Right cardiac atrium (tissue), 5 donors: ENCODE measurements at regions of chr11 and their contacts with region 1.

Region 1: GRCh38 chr11:111283945-111284481 is 14.3 kb upstream of the POU2AF3 start:
- DNase-seq: peak; percentile 29 to 62 (median 55)
- ATAC-seq: peak; percentile 58 to 74
- H3K4me3 ChIP-seq: no peak overlapping the region
- H3K27ac ChIP-seq: no peak overlapping the region
- H3K4me1 ChIP-seq: no peaks in the 10 kb centered on the region
- H3K27me3 ChIP-seq: no peaks in the 10 kb centered on the region

Region 2: GRCh38 chr11:111327908-111328624 is 44.1 kb after region 1 on chr11:
- intact Hi-C with region 1: no loop called
- DNase-seq: peak in 2 of 3 donors; percentile 34 to 50
- ATAC-seq: peak; percentile 13 to 21
- H3K4me3 ChIP-seq: no peak overlapping the region
- H3K27ac ChIP-seq: peak overlapping the region; percentile 4
- H3K4me1 ChIP-seq: peaks cover 10% of the 10 kb centered on the region
- H3K27me3 ChIP-seq: no peaks in the 10 kb centered on the region

Region 3: DNA sequence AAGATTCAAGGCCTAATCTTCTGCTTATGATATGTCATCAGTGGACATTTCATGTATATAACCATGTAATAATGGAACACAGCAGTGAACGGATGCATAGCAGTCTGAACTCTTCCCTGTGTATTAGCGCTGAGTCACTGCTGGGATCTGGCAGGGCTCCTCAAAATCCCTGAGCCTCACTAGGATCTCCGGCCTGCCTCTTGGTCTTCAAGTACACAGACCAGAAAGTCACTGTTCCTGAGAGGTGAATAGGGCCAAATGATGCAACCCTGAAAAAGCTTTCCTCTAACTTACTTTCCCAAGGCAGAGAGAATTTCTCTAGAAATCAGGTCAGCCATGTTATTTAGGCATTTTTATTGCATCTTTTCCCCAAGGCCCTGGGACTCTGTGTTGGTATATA is 60.0 kb after region 1 on chr11:
- intact Hi-C with region 1: no loop called
- DNase-seq: peak; percentile 71 to 83 (median 71)
- ATAC-seq: peak; percentile 78 to 89
- H3K4me3 ChIP-seq: no peak overlapping the region
- H3K27ac ChIP-seq: no peak overlapping the region
- H3K4me1 ChIP-seq: no peaks in the 10 kb centered on the region
- H3K27me3 ChIP-seq: no peaks in the 10 kb centered on the region

Region 4: GRCh38 chr11:111422494-111423249 is 138.7 kb after region 1 on chr11:
- intact Hi-C with region 1: loop called in 1 of 4 experiments (anchors 2 kb)
- DNase-seq: peak; percentile 19 to 71 (median 70)
- ATAC-seq: peak; percentile 52 to 63
- H3K4me3 ChIP-seq: no peak overlapping the region
- H3K27ac ChIP-seq: no peak overlapping the region
- H3K4me1 ChIP-seq: no peaks in the 10 kb centered on the region
- H3K27me3 ChIP-seq: no peaks in the 10 kb centered on the region

Region 5: DNA sequence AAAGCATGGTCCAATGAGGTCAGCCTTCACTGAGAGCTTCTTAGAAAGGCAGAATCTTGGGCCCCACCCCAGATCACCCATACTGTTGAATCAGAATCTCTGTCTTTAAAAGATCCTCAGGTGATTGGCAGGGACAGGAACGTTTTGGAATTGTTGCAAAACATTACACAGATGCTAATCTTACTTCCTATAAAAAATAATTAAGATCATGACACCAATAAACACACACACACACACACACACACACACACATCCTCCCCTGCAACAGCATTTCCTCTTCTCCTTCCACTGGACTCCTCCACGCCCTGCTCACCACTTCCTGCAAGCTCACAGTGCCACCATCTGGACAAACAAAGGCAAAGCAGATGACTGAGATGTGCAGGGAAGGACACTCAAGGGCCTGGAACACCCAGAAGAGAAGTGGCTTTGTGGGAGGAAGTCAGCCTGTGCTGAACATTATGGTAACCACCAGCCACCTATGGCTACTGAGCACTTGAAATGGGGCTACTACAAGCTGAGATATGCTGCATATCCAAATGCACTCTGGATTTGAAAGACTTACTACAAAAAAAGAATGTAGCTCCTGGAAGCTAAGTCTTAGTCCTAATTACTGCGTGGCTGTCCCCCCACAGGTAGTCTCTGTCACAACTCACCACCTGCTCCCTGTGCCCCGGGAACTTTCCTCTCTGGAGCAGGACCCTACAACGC is 162.5 kb after region 1 on chr11:
- intact Hi-C with region 1: loop called (anchors 2 to 5 kb)
- DNase-seq: peak; percentile 73 to 85 (median 84)
- ATAC-seq: peak; percentile 96 to 97
- H3K4me3 ChIP-seq: no peak overlapping the region
- H3K27ac ChIP-seq: no peak overlapping the region
- H3K4me1 ChIP-seq: no peaks in the 10 kb centered on the region
- H3K27me3 ChIP-seq: no peaks in the 10 kb centered on the region